ENCODE measurements at regions of chr6 and their contacts with region 1.

Region 1: GRCh38 chr6:142913511-142914047 is 31.4 kb downstream of the HIVEP2 start:
- DNase-seq: peak; percentile 82
- ATAC-seq: peak; percentile 88
- H3K4me3 Mint-ChIP-seq: peak overlapping the region; percentile 65
- H3K27ac Mint-ChIP-seq: peak overlapping the region; percentile 97
- H3K4me1 Mint-ChIP-seq: peaks cover 86% of the 10 kb centered on the region
- H3K27me3 Mint-ChIP-seq: no peaks in the 10 kb centered on the region

Region 2: DNA sequence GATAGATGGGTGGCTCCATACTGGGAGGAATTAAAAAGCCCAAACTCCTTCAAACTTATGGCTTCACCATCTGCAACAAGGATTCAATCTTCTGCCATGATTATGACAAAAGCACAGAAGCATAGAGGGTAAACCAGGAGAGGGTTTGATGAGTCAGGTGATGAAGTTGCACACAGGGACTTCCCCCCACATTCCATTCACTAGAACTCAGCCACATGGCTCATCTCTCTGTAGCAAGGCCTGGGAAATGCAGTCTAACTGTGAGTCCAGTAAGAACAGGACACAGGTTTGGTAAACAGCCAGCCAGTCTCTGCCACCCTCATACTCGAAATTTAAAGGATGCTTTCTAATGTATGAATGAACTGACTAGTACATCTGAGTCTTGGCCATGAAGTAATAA is 111.5 kb before region 1 on chr6:
- CTCF ChIA-PET with region 1: interaction called, 3 read pairs
- POLR2A ChIA-PET with region 1: interaction called, 11 read pairs
- intact Hi-C with region 1: no loop called
- DNase-seq: peak; percentile 73
- ATAC-seq: peak; percentile 92
- H3K4me3 Mint-ChIP-seq: no peak overlapping the region
- H3K27ac Mint-ChIP-seq: peak overlapping the region; percentile 91
- H3K4me1 Mint-ChIP-seq: peaks cover 94% of the 10 kb centered on the region
- H3K27me3 Mint-ChIP-seq: no peaks in the 10 kb centered on the region

Region 3: GRCh38 chr6:142850679-142851423 is 62.7 kb before region 1 on chr6:
- CTCF ChIA-PET with region 1: interaction called, 3 read pairs
- POLR2A ChIA-PET with region 1: interaction called, 10 read pairs
- intact Hi-C with region 1: loop called (anchors 1 to 2 kb)
- DNase-seq: peak; percentile 66
- ATAC-seq: peak; percentile 67
- H3K4me3 Mint-ChIP-seq: peak overlapping the region; percentile 37
- H3K27ac Mint-ChIP-seq: peak overlapping the region; percentile 86
- H3K4me1 Mint-ChIP-seq: peaks cover 95% of the 10 kb centered on the region
- H3K27me3 Mint-ChIP-seq: no peaks in the 10 kb centered on the region

Region 4: GRCh38 chr6:142871910-142872331 is 41.7 kb before region 1 on chr6:
- CTCF ChIA-PET with region 1: no interaction called
- POLR2A ChIA-PET with region 1: interaction called, 4 read pairs
- intact Hi-C with region 1: loop called in 1 of 2 experiments (anchors 1 kb)
- DNase-seq: peak; percentile 72
- ATAC-seq: peak; percentile 93
- H3K4me3 Mint-ChIP-seq: peak overlapping the region; percentile 42
- H3K27ac Mint-ChIP-seq: peak overlapping the region; percentile 91
- H3K4me1 Mint-ChIP-seq: peaks cover 86% of the 10 kb centered on the region
- H3K27me3 Mint-ChIP-seq: no peaks in the 10 kb centered on the region

Region 5: GRCh38 chr6:142926494-142927270 is 13.1 kb after region 1 on chr6:
- CTCF ChIA-PET with region 1: interaction called, 8 read pairs
- POLR2A ChIA-PET with region 1: interaction called, 6 read pairs
- intact Hi-C with region 1: loop called (anchors 1 kb)
- DNase-seq: peak; percentile 83
- ATAC-seq: peak; percentile 68
- H3K4me3 Mint-ChIP-seq: peak overlapping the region; percentile 92
- H3K27ac Mint-ChIP-seq: peak overlapping the region; percentile 99
- H3K4me1 Mint-ChIP-seq: peaks cover 61% of the 10 kb centered on the region
- H3K27me3 Mint-ChIP-seq: no peaks in the 10 kb centered on the region